Activated CD8-positive, alpha-beta T cell treated with anti-CD3 and anti-CD28 coated beads for 36 hours (primary cell): ENCODE measurements at regions of chr2 and their contacts with region 1.

Region 1: DNA sequence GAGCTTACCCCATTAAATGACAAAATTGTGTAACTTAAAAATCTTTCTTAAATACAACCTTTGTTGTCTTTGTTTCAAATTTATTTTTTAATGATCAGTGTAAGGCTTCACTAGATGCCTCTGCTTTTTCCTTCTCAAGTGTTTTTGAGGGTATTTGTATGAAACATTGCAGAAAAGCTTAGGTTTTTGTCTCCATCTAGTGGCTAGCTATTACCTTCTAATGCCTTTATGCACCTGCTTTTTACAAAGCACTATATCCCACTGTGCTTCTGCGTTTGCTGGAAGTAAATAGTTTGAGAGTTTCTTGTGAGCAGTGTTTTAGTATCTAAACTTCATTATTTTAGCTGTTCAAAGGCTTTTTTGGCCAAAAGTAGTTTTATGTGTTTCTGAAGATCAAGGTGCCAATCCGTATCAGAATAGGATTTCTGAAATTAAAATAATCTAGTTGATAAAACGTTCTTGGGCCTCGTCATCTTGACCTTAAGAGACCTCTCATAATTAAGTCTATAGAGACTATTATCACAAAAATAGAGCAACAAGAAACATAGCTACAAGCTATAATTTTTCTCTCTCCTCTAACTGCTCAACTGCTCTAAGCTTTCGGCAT is 47.0 kb downstream of the IWS1 start:
- DNase-seq: no peak
- ATAC-seq: peak; percentile 60
- H3K4me3 Mint-ChIP-seq: no peak overlapping the region
- H3K27ac Mint-ChIP-seq: no peak overlapping the region
- H3K4me1 Mint-ChIP-seq: no peaks in the 10 kb centered on the region
- H3K27me3 Mint-ChIP-seq: no peaks in the 10 kb centered on the region
- CTCF ChIP-seq: peak; percentile 75

Region 2: DNA sequence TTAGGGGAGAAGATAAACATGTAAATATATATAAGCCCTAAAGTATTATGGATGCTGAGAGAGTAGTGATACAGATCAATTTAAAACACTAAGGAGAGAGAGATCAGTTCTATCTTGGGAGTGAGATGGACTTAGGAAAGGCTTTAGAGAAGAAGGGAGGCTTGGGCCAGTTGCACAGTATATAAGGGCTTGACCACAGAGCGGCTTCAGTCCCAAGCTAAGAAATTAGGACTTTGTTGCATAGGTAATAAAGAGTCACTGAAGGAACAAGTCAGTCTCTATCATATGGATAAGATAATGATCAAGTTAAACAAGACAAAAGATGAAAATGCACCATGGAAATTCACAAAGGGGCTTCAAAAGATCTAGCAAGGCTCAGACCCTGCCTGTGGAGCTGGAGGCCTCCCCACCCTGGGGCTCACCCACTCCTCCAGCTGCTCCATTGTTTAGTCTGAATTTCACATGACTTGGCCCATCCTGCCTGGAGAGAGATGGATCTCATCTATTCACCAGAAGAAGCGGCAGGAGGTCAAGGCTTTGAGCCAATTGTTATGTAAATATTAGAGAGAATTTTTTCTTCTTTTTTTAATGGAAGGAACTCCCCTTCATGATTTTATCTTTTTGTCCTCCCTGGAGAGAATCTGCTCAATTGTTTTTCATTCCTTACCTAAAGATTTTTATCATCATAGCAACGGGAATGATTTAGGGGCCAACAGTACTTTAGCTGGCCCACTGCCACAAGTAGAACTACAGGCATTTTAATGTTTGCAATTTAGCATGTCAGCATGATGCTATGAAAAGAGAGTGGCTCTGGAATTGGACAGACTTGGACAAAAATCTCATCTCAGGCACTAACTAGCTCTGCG is 779.4 kb before region 1 on chr2:
- CTCF ChIA-PET with region 1: no interaction called
- POLR2A ChIA-PET with region 1: no interaction called
- intact Hi-C with region 1: no loop called
- DNase-seq: no peak
- ATAC-seq: no peak
- H3K4me3 Mint-ChIP-seq: no peak overlapping the region
- H3K27ac Mint-ChIP-seq: no peak overlapping the region
- H3K4me1 Mint-ChIP-seq: peaks cover 5% of the 10 kb centered on the region
- H3K27me3 Mint-ChIP-seq: no peaks in the 10 kb centered on the region
- CTCF ChIP-seq: no peak

Region 3: GRCh38 chr2:127197475-127198385 is 281.6 kb before region 1 on chr2:
- CTCF ChIA-PET with region 1: interaction called, 15 read pairs
- POLR2A ChIA-PET with region 1: no interaction called
- intact Hi-C with region 1: no loop called
- DNase-seq: peak; percentile 82
- ATAC-seq: peak; percentile 96
- H3K4me3 Mint-ChIP-seq: peak overlapping the region; percentile 65
- H3K27ac Mint-ChIP-seq: peak overlapping the region; percentile 69
- H3K4me1 Mint-ChIP-seq: no peaks in the 10 kb centered on the region
- H3K27me3 Mint-ChIP-seq: no peaks in the 10 kb centered on the region
- CTCF ChIP-seq: no peak

Region 4: DNA sequence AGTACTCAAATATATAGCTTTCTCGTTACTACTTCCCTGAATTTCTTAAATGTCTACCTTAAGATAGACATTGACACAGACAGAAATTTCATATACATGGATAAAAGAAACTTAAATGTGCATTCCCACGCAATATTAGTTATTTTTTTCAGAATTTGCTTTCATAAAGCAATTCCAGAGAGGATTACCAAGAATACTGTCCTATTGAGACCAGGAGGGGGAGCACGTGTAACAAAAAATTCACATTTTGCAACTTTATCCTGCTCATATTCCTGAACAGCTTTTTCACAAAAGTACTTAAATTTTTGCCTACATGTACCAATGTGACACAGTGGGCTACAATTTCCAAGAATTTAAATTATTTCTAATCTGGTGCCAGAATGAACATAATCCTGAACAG is 154.7 kb before region 1 on chr2:
- CTCF ChIA-PET with region 1: interaction called, 24 read pairs
- POLR2A ChIA-PET with region 1: no interaction called
- intact Hi-C with region 1: loop called (anchors 10 kb)
- DNase-seq: no peak
- ATAC-seq: no peak
- H3K4me3 Mint-ChIP-seq: no peak overlapping the region
- H3K27ac Mint-ChIP-seq: no peak overlapping the region
- H3K4me1 Mint-ChIP-seq: peaks cover 6% of the 10 kb centered on the region
- H3K27me3 Mint-ChIP-seq: no peaks in the 10 kb centered on the region
- CTCF ChIP-seq: peak; percentile 55

Region 5: GRCh38 chr2:127415593-127416505 is 63.5 kb before region 1 on chr2:
- CTCF ChIA-PET with region 1: interaction called, 21 read pairs
- POLR2A ChIA-PET with region 1: no interaction called
- intact Hi-C with region 1: no loop called
- DNase-seq: peak; percentile 90
- ATAC-seq: peak; percentile 96
- H3K4me3 Mint-ChIP-seq: peak overlapping the region; percentile 69
- H3K27ac Mint-ChIP-seq: peak overlapping the region; percentile 69
- H3K4me1 Mint-ChIP-seq: peaks cover 32% of the 10 kb centered on the region
- H3K27me3 Mint-ChIP-seq: peaks cover 7% of the 10 kb centered on the region
- CTCF ChIP-seq: peak; percentile 85

Region 6: DNA sequence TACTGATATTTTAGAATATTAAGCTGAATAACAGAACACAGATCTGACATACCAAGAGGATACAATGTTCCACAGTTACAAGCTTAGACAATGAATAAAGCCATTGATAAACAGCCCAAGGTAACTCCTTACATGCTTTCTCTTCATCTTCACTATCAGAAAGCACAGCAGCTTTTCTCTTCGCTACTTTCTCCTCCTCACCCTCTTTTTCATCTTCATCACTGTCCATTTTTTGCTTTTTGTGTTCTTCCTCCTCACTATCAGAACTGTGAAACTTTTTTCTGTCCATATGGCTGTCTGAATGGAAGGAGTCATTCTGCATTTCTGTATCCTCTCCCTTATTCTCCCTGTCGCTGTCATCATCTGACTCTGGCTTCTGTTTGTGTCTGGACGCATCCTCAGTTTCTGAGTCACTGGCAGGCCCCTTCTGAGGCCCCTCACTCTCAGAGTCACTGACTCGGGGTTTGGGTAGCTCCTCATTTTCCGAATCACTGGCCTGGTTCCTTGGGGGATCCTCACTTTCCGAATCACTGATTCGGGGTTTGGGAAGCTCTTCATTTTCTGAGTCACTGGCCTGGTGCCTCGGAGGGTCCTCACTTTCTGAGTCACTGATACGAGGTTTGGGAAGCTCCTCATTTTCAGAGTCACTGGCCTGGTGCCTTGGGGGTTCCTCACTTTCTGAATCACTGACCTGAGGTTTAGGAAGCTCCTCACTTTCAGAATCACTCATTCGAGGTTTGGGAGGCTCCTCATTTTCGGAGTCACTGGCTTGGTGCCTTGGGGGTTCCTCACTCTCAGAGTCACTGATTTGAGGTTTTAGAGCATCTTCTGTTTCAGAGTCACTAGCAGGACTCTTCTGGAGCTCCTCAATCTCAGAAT is 25.5 kb after region 1 on chr2:
- CTCF ChIA-PET with region 1: interaction called, 13 read pairs
- POLR2A ChIA-PET with region 1: no interaction called
- intact Hi-C with region 1: no loop called
- DNase-seq: no peak
- ATAC-seq: no peak
- H3K4me3 Mint-ChIP-seq: no peak overlapping the region
- H3K27ac Mint-ChIP-seq: peak overlapping the region; percentile 39
- H3K4me1 Mint-ChIP-seq: peaks cover 23% of the 10 kb centered on the region
- H3K27me3 Mint-ChIP-seq: no peaks in the 10 kb centered on the region
- CTCF ChIP-seq: no peak

Region 7: DNA sequence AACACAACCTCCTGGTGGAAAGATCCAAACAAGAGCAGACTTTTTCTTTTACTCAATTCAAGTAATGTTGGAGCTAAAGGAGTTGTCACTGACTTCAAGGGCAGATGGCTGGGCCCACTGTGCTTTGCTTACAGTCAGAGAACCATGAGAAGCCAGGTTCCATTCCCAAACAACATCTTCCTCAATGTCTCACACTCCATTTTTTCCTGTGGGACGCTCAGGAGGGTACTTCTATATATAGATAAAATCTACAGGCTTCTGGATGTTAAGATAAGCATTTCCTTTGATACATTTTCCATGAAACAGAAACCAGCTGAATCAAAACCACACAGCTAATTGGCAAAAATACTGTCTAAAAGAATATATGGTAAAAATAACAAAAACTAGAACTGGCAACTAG is 32.6 kb after region 1 on chr2:
- CTCF ChIA-PET with region 1: interaction called, 11 read pairs
- POLR2A ChIA-PET with region 1: interaction called, 3 read pairs
- intact Hi-C with region 1: no loop called
- DNase-seq: no peak
- ATAC-seq: no peak
- H3K4me3 Mint-ChIP-seq: no peak overlapping the region
- H3K27ac Mint-ChIP-seq: peak overlapping the region; percentile 21
- H3K4me1 Mint-ChIP-seq: peaks cover 78% of the 10 kb centered on the region
- H3K27me3 Mint-ChIP-seq: no peaks in the 10 kb centered on the region
- CTCF ChIP-seq: no peak